T-cell (primary cell): ENCODE measurements at regions of chrX and their contacts with region 1.

Region 1: GRCh38 chrX:140756941-140757340 is 47.4 kb downstream of the LINC00632 start:
- DNase-seq: no peak
- ATAC-seq: no peak
- H3K4me3 ChIP-seq: no peak overlapping the region
- H3K4me3 Mint-ChIP-seq: no peak overlapping the region
- H3K27ac ChIP-seq: no peak overlapping the region
- H3K27ac Mint-ChIP-seq: no peak overlapping the region
- H3K4me1 ChIP-seq: no peaks in the 10 kb centered on the region
- H3K4me1 Mint-ChIP-seq: peaks cover 0 to 2% (median 0%) of the 10 kb centered on the region in 3 donors
- H3K27me3 ChIP-seq: no peaks in the 10 kb centered on the region
- H3K27me3 Mint-ChIP-seq: peaks cover 0 to 25% of the 10 kb centered on the region in 2 donors

Region 2: DNA sequence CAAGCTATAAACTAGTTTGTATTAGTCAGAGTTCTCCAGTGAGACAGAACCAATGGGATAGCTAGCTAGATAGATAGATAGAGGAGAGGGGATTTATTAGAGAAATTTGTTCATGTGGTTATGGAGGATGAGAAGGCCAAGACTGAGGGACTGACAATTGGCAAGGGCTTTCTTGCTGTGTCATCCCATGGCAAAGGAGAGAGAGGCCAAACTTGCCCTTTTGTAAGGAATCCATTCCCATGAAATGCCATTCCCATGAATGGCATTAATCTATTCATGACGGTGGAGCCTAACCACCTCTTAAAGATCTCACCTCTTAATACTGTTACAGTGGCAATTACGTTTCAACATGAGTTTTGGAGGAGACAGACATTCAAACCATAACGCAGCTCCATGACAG is 10.7 kb after region 1 on chrX:
- CTCF ChIA-PET with region 1: interaction called in 1 of 2 experiments, 10 read pairs
- POLR2A ChIA-PET with region 1: interaction called in 1 of 2 experiments, 4 read pairs
- DNase-seq: no peak
- ATAC-seq: no peak
- H3K4me3 ChIP-seq: no peak overlapping the region
- H3K4me3 Mint-ChIP-seq: no peak overlapping the region
- H3K27ac ChIP-seq: no peak overlapping the region
- H3K27ac Mint-ChIP-seq: no peak overlapping the region
- H3K4me1 ChIP-seq: peaks cover 0 to 5% of the 10 kb centered on the region in 2 experiments
- H3K4me1 Mint-ChIP-seq: peaks cover 9 to 15% (median 10%) of the 10 kb centered on the region in 3 donors
- H3K27me3 ChIP-seq: peaks cover 2 to 10% of the 10 kb centered on the region in 2 experiments
- H3K27me3 Mint-ChIP-seq: peaks cover 12 to 32% of the 10 kb centered on the region in 2 donors